Activated B cell treated with CpG ODN at 0.5 μM for 24 hours (primary cell): ENCODE measurements at regions of chr12 and their contacts with region 1.

Region 1: GRCh38 chr12:57111031-57111734 is at the start of gene STAT6:
- DNase-seq: peak; percentile 64
- ATAC-seq: peak; percentile 58
- H3K4me3 Mint-ChIP-seq: peak within 1 kb of the TSS; percentile 100
- H3K27ac Mint-ChIP-seq: peak within 1 kb of the TSS; percentile 98
- H3K4me1 Mint-ChIP-seq: peaks cover 46% of the 10 kb centered on the region
- H3K27me3 Mint-ChIP-seq: no peaks in the 10 kb centered on the region
- CTCF ChIP-seq: no peak
- total RNA-seq, gene STAT6: 635 and 745 TPM in 2 replicates

Region 2: DNA sequence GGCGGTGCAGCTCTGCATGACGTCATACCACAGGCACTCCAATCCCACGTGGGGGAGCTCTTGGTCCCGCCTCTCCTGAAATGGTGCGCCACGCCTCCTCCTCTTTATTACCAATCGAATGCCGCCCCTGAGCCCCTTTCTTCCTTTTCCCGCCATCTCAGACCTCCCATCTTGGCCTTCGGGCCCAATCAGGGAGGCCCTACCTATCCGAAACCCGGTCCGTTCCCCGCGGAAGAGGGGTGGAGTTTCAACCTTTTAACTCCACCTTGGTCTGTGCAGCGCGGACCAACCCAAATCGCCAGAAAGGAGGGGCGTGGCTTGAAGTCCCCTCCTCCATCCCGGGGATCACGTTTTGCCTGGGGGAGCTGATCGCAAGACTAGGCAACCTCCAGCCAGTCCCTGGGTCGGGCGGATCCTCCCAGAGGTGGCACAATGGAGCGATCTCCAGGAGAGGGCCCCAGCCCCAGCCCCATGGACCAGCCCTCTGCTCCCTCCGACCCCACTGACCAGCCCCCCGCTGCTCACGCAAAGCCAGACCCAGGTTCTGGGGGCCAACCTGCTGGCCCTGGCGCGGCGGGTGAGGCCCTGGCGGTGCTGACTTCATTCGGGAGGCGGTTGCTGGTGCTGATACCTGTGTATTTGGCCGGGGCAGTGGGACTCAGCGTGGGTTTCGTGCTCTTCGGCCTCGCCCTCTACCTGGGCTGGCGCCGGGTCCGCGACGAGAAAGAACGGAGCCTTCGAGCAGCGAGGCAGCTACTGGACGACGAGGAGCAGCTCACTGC is 983.1 kb before region 1 on chr12 and contains the start of gene ESYT1:
- CTCF ChIA-PET with region 1: no interaction called
- POLR2A ChIA-PET with region 1: no interaction called
- intact Hi-C with region 1: loop called (anchors 1 kb)
- DNase-seq: peak; percentile 83
- ATAC-seq: peak; percentile 86
- H3K4me3 Mint-ChIP-seq: peak within 1 kb of the TSS; percentile 97
- H3K27ac Mint-ChIP-seq: peak within 1 kb of the TSS; percentile 98
- H3K4me1 Mint-ChIP-seq: peaks cover 69% of the 10 kb centered on the region
- H3K27me3 Mint-ChIP-seq: no peaks in the 10 kb centered on the region
- CTCF ChIP-seq: no peak
- total RNA-seq, gene ESYT1: 120 and 137 TPM in 2 replicates

Region 3: GRCh38 chr12:56724972-56725722 is 386.0 kb before region 1 on chr12 and contains the start of gene NACA:
- CTCF ChIA-PET with region 1: interaction called, 4 read pairs
- POLR2A ChIA-PET with region 1: interaction called, 8 read pairs
- intact Hi-C with region 1: loop called (anchors 1 kb)
- DNase-seq: peak; percentile 90
- ATAC-seq: peak; percentile 95
- H3K4me3 Mint-ChIP-seq: peak within 1 kb of the TSS; percentile 99
- H3K27ac Mint-ChIP-seq: peak within 1 kb of the TSS; percentile 98
- H3K4me1 Mint-ChIP-seq: peaks cover 52% of the 10 kb centered on the region
- H3K27me3 Mint-ChIP-seq: no peaks in the 10 kb centered on the region
- CTCF ChIP-seq: no peak
- total RNA-seq, gene NACA: 1,104 and 1,342 TPM in 2 replicates

Region 4: DNA sequence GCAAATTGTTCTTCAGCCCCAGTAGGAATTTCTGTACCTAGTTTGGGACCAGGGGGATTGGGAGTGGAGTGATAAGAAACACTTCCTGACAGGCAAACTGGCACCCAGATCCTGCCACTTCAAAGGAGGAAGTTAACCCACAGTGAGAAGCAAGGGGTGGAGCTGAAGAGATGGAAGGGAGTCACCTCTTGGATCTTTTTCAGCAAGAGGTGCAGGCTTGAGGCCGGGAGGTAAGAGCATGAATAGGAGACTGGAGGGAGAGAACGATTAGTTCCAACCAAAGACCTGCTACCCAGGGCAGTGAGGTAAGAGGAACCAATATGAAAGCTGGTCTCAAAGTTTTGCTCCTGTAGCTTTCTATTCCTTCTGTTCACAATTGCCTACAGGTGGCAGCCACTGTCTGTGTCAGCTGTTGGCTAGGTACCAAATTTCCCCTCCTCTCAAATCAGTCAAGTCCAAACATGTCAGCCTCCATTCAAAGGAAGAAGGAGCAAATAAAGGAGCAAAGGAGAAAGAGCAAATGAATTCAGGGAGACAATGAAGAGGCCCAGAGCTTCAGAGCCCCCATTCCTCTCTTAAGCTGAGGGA is 80.0 kb before region 1 on chr12:
- CTCF ChIA-PET with region 1: interaction called, 15 read pairs
- POLR2A ChIA-PET with region 1: interaction called, 15 read pairs
- intact Hi-C with region 1: loop called (anchors 1 kb)
- DNase-seq: no peak
- ATAC-seq: peak; percentile 69
- H3K4me3 Mint-ChIP-seq: no peak overlapping the region
- H3K27ac Mint-ChIP-seq: peak overlapping the region; percentile 72
- H3K4me1 Mint-ChIP-seq: peaks cover 14% of the 10 kb centered on the region
- H3K27me3 Mint-ChIP-seq: no peaks in the 10 kb centered on the region
- CTCF ChIP-seq: no peak

Region 5: DNA sequence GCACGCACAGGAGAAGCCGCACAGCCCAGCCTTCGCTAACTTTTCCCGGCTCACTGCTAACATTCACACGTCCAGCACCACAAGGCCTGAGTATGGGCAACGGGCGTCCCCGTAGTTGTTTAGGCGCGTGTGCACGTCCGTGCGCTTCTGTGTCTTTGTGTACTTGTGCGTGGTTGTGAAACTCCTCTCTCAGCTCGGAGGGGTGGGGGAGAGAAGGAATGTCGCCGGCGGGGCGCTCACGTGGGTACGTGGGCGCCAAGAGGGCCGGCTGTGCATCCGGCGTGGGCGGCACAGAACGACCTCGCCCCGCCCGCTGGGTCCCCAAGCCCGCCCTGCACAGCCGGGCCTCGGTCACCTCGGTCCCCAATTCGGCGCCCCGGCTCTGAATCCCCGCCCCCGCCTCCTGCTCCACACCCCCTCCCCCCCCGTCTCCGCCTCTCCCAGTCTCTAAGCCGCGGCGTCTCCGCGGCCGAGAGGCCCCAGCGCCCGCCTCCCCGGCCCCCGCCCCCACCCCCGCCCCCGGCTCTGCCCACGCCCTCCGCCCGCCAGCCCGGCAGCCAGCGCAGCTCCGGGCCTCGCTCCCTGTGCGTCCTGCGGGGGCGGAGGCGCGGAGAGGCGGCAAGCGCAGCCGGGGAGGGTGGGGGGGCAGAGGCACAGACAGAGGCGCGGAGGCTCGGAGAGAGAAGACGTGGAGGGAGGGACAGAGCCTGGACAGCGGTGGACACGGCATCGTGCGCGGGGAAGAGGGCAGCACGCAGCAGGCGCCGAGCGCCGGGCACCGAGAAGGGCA is 22.5 kb before region 1 on chr12 and contains the start of gene NAB2:
- CTCF ChIA-PET with region 1: interaction called, 45 read pairs
- POLR2A ChIA-PET with region 1: interaction called, 692 read pairs
- intact Hi-C with region 1: loop called (anchors 1 kb)
- DNase-seq: peak; percentile 89
- ATAC-seq: peak; percentile 66
- H3K4me3 Mint-ChIP-seq: peak within 1 kb of the TSS; percentile 91
- H3K27ac Mint-ChIP-seq: peak within 1 kb of the TSS; percentile 96
- H3K4me1 Mint-ChIP-seq: peaks cover 55% of the 10 kb centered on the region
- H3K27me3 Mint-ChIP-seq: no peaks in the 10 kb centered on the region
- CTCF ChIP-seq: no peak
- total RNA-seq, gene NAB2: 20.4 and 22.1 TPM in 2 replicates

Region 6: GRCh38 chr12:57213058-57213715 is 102.0 kb after region 1 on chr12:
- CTCF ChIA-PET with region 1: no interaction called
- POLR2A ChIA-PET with region 1: interaction called, 15 read pairs
- intact Hi-C with region 1: no loop called
- DNase-seq: peak; percentile 75
- ATAC-seq: peak; percentile 49
- H3K4me3 Mint-ChIP-seq: peak overlapping the region; percentile 13
- H3K27ac Mint-ChIP-seq: peak overlapping the region; percentile 47
- H3K4me1 Mint-ChIP-seq: peaks cover 44% of the 10 kb centered on the region
- H3K27me3 Mint-ChIP-seq: peaks cover 13% of the 10 kb centered on the region
- CTCF ChIP-seq: peak; percentile 30